Heart left ventricle (tissue), 16 donors: ENCODE measurements at regions of chr7 and their contacts with region 1.

Region 1: GRCh38 chr7:87506246-87507180 is 31.0 kb upstream of the ABCB4 start:
- DNase-seq: no peak
- ATAC-seq: peak in 1 of 4 donors; percentile 34
- H3K4me3 ChIP-seq: no peak overlapping the region
- H3K27ac ChIP-seq: no peak overlapping the region
- H3K4me1 ChIP-seq: peaks cover 0 to 5% (median 0%) of the 10 kb centered on the region in 12 donors
- H3K27me3 ChIP-seq: no peaks in the 10 kb centered on the region
- CTCF ChIP-seq: peak in 11 of 12 donors; percentile 17 to 57 (median 38)
- POLR2A ChIP-seq: no peak

Region 2: DNA sequence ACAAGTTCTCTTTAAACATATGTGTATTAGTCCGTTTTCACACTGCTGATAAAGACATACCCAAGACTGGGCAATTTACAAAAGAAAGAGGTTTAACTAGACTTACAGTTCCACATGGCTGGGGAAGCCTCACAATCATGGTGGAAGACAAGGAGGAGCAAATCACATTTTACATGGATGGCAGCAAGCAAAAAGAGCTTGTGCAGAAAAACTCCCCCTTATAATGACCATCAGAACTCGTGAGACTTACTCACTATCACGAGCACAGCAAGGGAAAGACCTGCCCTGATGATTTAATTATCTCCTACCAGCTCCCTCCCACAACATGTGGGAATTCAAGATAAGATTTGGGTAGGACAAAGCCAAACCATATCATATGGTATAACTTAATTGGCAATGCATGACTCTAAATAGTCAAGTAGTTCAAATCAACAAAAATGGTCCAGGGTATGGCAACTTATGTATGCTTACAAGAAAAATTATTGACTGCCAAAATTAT is 252.9 kb before region 1 on chr7:
- intact Hi-C with region 1: no loop called
- DNase-seq: no peak
- ATAC-seq: no peak
- H3K4me3 ChIP-seq: no peak overlapping the region
- H3K27ac ChIP-seq: no peak overlapping the region
- H3K4me1 ChIP-seq: no peaks in the 10 kb centered on the region
- H3K27me3 ChIP-seq: no peaks in the 10 kb centered on the region
- CTCF ChIP-seq: no peak
- POLR2A ChIP-seq: no peak

Region 3: DNA sequence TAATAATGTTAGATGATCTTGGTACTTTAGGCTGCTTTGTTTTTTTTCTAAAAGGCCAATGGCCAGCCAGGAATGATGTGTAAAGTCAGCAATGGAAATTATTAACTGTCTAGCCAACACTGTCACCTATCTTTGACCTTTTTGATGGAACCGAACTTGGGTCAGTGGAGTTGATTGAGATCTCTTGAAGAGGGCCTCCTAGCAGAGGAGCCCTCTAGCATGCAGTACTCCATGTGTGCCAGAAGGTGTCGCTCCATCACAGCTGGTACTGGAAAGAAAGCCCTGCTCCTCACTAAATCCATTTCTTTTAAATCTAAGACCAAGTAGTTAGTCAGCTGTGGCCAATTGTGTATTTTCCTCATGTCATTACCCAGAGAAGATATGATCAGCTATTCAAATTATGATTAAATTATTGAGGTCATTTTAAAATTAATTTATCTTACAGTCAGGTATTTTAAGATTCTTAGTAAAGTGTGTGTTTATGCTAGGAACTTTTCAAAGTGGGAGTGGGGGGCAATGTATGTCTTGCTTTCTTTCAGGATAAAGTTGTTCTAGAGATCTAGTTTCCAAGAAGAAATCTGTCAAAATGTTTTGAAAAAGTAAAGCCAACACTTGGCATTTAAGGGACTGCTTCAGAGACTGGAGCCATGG is 194.2 kb before region 1 on chr7:
- intact Hi-C with region 1: loop called in 2 of 10 experiments (anchors 5 kb)
- DNase-seq: peak in 2 of 5 donors; percentile 44 to 45
- ATAC-seq: peak in 3 of 4 donors; percentile 75 to 86 (median 84)
- H3K4me3 ChIP-seq: no peak overlapping the region
- H3K27ac ChIP-seq: no peak overlapping the region
- H3K4me1 ChIP-seq: no peaks in the 10 kb centered on the region
- H3K27me3 ChIP-seq: no peaks in the 10 kb centered on the region
- CTCF ChIP-seq: peak; percentile 95 to 99 (median 97)
- POLR2A ChIP-seq: no peak

Region 4: DNA sequence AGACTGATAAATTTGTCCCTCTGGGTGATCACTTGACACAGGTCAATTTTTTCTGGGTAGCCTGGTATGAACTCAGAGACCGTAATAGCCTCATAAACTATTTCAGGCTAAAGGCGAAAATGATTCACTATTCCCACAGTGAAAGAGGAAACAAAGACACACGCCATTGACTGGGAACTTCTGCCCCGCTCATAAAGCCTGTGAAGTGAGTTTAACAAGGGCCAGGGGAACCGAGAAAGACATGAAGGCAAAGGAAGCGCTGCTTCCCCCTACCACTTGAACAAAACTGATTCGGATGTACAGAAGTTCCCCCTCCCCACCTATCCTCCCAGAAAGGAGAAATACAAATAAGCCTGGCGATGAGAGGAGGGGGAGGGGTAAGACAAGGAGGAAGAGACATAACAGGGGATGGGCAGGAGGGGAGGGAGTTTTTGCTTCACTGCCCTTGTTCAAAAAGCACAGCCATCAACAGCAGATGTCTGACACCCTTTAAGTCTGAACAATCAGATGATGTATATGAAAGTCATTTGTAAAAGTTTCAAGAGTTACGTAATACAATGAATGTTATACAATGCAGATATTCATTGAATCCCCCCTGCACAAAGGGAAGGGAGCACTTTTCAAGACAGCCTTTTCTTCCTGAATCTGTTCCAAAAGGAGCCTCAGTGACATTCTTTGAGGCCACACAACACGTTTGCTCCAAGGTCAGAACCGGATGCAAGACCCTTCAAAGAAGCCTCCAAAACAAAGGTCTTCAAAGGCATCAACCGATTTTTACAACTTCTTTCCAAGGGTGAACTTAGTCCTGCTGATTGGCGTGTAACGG is 31.8 kb before region 1 on chr7:
- intact Hi-C with region 1: loop called in 1 of 10 experiments (anchors 2 kb)
- DNase-seq: peak in 3 of 5 donors; percentile 20 to 28 (median 22)
- ATAC-seq: peak; percentile 69 to 88 (median 81)
- H3K4me3 ChIP-seq: peak overlapping the region; percentile 42 to 78 (median 64)
- H3K27ac ChIP-seq: peak overlapping the region; percentile 67 to 94 (median 77)
- H3K4me1 ChIP-seq: peaks cover 0 to 31% (median 5%) of the 10 kb centered on the region in 12 donors
- H3K27me3 ChIP-seq: peaks cover 0 to 20% (median 0%) of the 10 kb centered on the region in 9 donors
- CTCF ChIP-seq: no peak
- POLR2A ChIP-seq: no peak

Region 5: GRCh38 chr7:87886875-87887274 is 380.4 kb after region 1 on chr7:
- intact Hi-C with region 1: loop called in 7 of 10 experiments (anchors 5 to 10 kb)
- DNase-seq: no peak
- ATAC-seq: no peak
- H3K4me3 ChIP-seq: no peak overlapping the region
- H3K27ac ChIP-seq: no peak overlapping the region
- H3K4me1 ChIP-seq: no peaks in the 10 kb centered on the region
- H3K27me3 ChIP-seq: no peaks in the 10 kb centered on the region
- CTCF ChIP-seq: peak; percentile 23 to 65 (median 48)
- POLR2A ChIP-seq: no peak

Region 6: GRCh38 chr7:88101769-88102168 is 595.3 kb after region 1 on chr7:
- intact Hi-C with region 1: loop called in 1 of 10 experiments (anchors 10 kb)
- DNase-seq: no peak
- ATAC-seq: no peak
- H3K4me3 ChIP-seq: no peak overlapping the region
- H3K27ac ChIP-seq: no peak overlapping the region
- H3K4me1 ChIP-seq: peaks cover 0 to 5% (median 0%) of the 10 kb centered on the region in 12 donors
- H3K27me3 ChIP-seq: no peaks in the 10 kb centered on the region
- CTCF ChIP-seq: no peak
- POLR2A ChIP-seq: no peak

Region 7: GRCh38 chr7:88111136-88111743 is 604.7 kb after region 1 on chr7:
- intact Hi-C with region 1: loop called in 3 of 10 experiments (anchors 10 kb)
- DNase-seq: no peak
- ATAC-seq: peak in 1 of 4 donors; percentile 53
- H3K4me3 ChIP-seq: no peak overlapping the region
- H3K27ac ChIP-seq: no peak overlapping the region
- H3K4me1 ChIP-seq: peaks cover 0 to 13% (median 2%) of the 10 kb centered on the region in 12 donors
- H3K27me3 ChIP-seq: no peaks in the 10 kb centered on the region
- CTCF ChIP-seq: peak; percentile 36 to 76 (median 62)
- POLR2A ChIP-seq: no peak

Region 8: GRCh38 chr7:88169717-88170320 is 663.3 kb after region 1 on chr7:
- intact Hi-C with region 1: loop called in 1 of 10 experiments (anchors 5 kb)
- DNase-seq: no peak
- ATAC-seq: no peak
- H3K4me3 ChIP-seq: no peak overlapping the region
- H3K27ac ChIP-seq: no peak overlapping the region
- H3K4me1 ChIP-seq: peaks cover 0 to 6% (median 0%) of the 10 kb centered on the region in 12 donors
- H3K27me3 ChIP-seq: no peaks in the 10 kb centered on the region
- CTCF ChIP-seq: peak; percentile 36 to 68 (median 52)
- POLR2A ChIP-seq: no peak